GM10248 (cell line): ENCODE measurements at regions of chr9 and their contacts with region 1.

Region 1: GRCh38 chr9:38641985-38642864 is 21.8 kb upstream of the ANKRD18A start:
- DNase-seq: peak; percentile 42
- CTCF ChIP-seq: peak; percentile 59

Region 2: GRCh38 chr9:38451162-38451561 is 191.1 kb before region 1 on chr9:
- CTCF ChIA-PET with region 1: no interaction called
- POLR2A ChIA-PET with region 1: no interaction called
- DNase-seq: no peak
- CTCF ChIP-seq: no peak

Region 3: DNA sequence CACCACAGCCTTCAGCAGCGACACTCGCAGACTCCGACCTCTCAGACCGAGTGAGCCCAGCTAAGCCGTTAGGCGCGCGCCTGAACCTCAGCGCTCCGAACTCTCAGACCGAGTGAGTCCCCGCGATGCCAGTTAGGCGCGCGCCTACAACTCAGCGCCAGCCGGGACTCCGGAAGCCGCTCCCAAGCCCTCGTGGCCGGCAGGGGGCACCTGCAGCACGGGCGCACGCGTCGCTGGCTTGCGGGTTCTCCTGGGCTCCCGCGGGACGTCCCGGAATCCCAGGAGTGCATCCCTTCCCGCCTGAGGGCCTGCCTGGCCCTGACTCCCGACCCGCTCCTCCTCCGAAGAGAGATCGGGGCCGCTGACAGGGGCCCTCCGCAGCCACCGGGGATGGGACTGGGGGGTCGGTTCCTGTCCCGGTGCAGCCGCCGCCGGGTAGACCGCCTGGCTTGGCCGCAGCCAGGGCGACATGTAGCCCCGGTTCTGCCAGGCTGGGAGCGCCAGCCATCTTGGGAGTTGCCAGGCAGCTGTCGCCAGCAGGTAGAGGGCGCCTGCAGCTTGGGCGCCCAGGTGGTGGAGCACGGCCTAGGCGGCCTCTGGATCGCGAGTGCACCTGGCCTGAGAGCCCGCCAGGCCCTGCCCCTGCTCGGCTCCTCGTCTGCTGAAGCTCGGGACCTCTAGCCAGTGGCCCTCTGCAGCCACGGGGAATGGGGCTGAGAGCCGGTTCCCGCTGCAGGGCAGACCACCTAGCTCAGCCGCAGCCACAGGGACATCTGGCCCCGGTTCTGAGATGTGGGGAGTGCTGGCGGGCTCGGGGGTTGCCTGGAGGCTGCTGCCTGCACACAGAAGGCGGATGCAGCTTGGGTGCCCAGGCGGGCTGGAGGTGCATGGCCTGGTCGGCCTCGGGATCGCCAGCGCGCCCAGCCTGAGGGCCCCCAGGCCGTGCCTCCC is 21.5 kb before region 1 on chr9 and contains the start of gene ANKRD18A:
- CTCF ChIA-PET with region 1: interaction called, 17 read pairs
- POLR2A ChIA-PET with region 1: no interaction called
- DNase-seq: peak; percentile 65
- CTCF ChIP-seq: peak; percentile 69

Region 4: GRCh38 chr9:38626006-38626405 is 16.2 kb before region 1 on chr9:
- CTCF ChIA-PET with region 1: interaction called, 17 read pairs
- POLR2A ChIA-PET with region 1: no interaction called
- DNase-seq: no peak
- CTCF ChIP-seq: no peak

Region 5: DNA sequence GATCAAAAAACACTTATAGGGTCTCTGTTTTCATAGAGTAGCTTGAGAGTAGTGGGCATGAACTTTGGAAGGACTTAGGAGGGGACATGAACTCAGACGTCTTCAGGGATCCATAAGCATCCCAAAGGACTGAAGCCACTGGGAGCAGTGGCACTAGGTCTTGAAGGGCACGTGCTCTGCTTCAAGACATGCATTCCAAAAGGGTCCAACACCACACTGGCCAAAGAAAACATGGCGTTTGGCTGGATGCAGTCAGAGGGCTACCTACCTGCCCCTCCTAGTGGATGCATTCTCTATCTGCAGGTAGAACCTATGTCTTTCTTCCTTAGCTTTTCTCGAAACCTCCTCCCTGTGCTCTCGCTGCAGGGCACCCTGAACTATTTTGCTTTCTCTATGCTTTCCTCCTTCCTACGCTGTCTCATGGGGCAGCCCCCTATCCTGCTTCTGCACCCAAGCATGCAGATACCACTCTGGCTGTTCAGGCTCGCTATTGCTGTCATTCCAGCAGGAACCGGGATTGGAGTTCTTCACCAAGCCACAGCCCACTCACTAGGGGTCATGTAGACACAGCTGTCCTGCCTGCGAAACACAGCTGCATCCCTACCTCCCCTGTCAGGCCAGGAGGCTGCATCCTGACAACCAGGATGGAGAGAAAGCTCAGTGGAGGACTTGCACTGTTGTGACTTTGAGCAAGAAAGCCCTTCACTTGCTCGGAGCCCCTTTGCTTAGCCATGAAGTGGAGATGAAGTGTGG is 65.8 kb after region 1 on chr9:
- CTCF ChIA-PET with region 1: interaction called, 47 read pairs
- POLR2A ChIA-PET with region 1: no interaction called
- DNase-seq: peak; percentile 32
- CTCF ChIP-seq: peak; percentile 28